Spleen (tissue), 13 donors: ENCODE measurements at regions of chr22 and their contacts with region 1.

Region 1: GRCh38 chr22:25572708-25573171 is 8.3 kb downstream of the GRK3 start:
- DNase-seq: no peak
- H3K4me3 ChIP-seq: no peak overlapping the region
- H3K27ac ChIP-seq: peak overlapping the region in 1 of 8 donors; percentile 2
- H3K4me1 ChIP-seq: peaks cover 11 to 86% (median 59%) of the 10 kb centered on the region in 6 donors
- H3K27me3 ChIP-seq: no peaks in the 10 kb centered on the region
- CTCF ChIP-seq: no peak
- POLR2A ChIP-seq: no peak

Region 2: DNA sequence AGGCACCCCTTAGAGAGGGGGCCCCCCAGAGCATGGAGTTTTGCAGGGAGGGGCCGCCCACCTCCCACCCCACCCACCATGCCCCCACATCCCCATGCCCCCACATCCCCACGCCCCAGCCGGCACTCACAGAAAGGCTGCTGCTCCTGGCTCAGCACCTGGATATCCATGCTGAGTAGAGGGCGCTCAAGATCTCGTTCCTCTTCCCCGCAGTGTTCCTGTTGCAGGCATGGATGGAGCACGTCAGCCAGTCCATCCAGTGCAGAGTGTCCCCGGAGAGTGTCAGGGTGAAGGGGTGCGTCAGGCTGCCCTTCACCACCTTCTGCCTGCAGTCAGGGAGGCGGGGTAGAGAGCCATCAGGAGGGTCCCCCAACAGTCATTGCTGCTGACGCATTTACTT is 197.1 kb before region 1 on chr22:
- intact Hi-C with region 1: no loop called
- DNase-seq: no peak
- H3K4me3 ChIP-seq: no peak overlapping the region
- H3K27ac ChIP-seq: no peak overlapping the region
- H3K4me1 ChIP-seq: peaks cover 0 to 23% (median 9%) of the 10 kb centered on the region in 6 donors
- H3K27me3 ChIP-seq: no peaks in the 10 kb centered on the region
- CTCF ChIP-seq: no peak
- POLR2A ChIP-seq: no peak

Region 3: DNA sequence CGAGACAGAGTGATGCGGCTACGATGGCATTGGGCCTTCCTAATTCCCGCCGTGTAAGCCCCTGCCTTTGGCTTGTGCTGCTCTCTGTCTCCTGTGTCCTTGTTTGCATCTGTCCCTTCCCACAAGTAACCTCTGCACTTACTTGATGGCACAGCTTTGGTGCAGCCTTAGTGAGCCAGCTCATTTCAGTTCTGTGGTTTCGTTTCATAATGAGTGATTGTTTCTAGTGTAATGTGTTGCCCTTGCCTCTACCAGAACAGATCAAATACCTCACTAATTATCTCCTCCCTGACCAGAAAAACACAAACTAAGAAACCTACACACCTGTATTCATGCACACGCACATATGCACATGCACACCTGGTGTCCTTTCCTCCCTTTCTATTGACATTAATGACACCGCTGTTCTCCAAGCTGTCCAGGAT is 50.6 kb after region 1 on chr22:
- intact Hi-C with region 1: loop called (anchors 10 kb)
- DNase-seq: no peak
- H3K4me3 ChIP-seq: no peak overlapping the region
- H3K27ac ChIP-seq: peak overlapping the region in 1 of 8 donors; percentile 29
- H3K4me1 ChIP-seq: peaks cover 10 to 64% (median 23%) of the 10 kb centered on the region in 6 donors
- H3K27me3 ChIP-seq: no peaks in the 10 kb centered on the region
- CTCF ChIP-seq: no peak
- POLR2A ChIP-seq: no peak

Region 4: GRCh38 chr22:25709758-25710157 is 137.0 kb after region 1 on chr22:
- intact Hi-C with region 1: no loop called
- DNase-seq: no peak
- H3K4me3 ChIP-seq: no peak overlapping the region
- H3K27ac ChIP-seq: no peak overlapping the region
- H3K4me1 ChIP-seq: no peaks in the 10 kb centered on the region
- H3K27me3 ChIP-seq: no peaks in the 10 kb centered on the region
- CTCF ChIP-seq: no peak
- POLR2A ChIP-seq: no peak